Activated CD4-positive, alpha-beta T cell treated with anti-CD3 and anti-CD28 coated beads, Interleukin-2, amount 10 ng/mL, durations not matched to agents 24 days and 14 days (primary cell): ENCODE measurements at regions of chr1 and their contacts with region 1.

Region 1: GRCh38 chr1:215526553-215527151 is 40.5 kb upstream of the KCTD3 start:
- DNase-seq: no peak
- H3K4me3 Mint-ChIP-seq: no peak overlapping the region
- H3K27ac Mint-ChIP-seq: no peak overlapping the region
- H3K4me1 Mint-ChIP-seq: peaks cover 2% of the 10 kb centered on the region
- H3K27me3 Mint-ChIP-seq: no peaks in the 10 kb centered on the region

Region 2: DNA sequence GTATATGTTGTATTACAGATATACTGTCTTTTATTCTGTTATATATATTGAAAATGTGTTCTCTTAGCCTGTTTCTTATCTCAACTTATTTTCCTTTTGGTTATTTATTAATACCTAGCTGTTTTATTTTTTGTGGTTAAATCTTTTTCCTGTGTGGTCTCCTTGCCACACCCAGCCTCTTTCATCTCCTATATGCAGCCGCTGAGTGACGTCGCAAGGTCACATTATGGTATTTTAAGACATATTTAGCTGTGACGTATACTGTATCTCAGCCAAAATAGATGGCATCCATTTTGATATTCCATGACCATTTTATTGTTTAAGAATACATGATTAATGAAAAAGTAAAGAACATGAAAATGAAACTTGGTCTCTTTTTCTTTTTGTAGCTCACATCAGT is 894.6 kb before region 1 on chr1:
- intact Hi-C with region 1: loop called (anchors 1 kb)
- DNase-seq: peak; percentile 76
- H3K4me3 Mint-ChIP-seq: peak overlapping the region; percentile 22
- H3K27ac Mint-ChIP-seq: no peak overlapping the region
- H3K4me1 Mint-ChIP-seq: peaks cover 33% of the 10 kb centered on the region
- H3K27me3 Mint-ChIP-seq: no peaks in the 10 kb centered on the region

Region 3: DNA sequence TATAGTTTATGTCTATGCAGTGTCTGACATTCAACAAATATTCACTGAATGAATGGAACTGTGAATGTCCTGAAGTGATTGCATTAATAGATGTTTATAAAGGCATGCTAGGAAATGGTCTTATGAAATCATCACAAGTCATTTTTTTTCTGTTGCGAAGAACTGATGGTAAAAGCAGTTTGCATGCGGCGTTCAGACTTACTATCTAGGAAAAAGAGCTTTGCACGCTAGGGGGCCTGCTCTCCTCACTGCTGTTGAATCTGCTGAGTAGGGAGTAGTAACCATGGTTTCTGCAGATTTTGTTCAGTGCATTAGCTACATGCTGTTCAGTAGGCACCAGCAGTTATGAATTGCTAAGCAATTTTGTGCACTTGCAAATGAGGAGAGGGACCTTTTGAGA is 865.8 kb before region 1 on chr1:
- intact Hi-C with region 1: loop called (anchors 10 kb)
- DNase-seq: peak; percentile 62
- H3K4me3 Mint-ChIP-seq: no peak overlapping the region
- H3K27ac Mint-ChIP-seq: no peak overlapping the region
- H3K4me1 Mint-ChIP-seq: peaks cover 5% of the 10 kb centered on the region
- H3K27me3 Mint-ChIP-seq: no peaks in the 10 kb centered on the region

Region 4: GRCh38 chr1:215166886-215167285 is 359.8 kb before region 1 on chr1:
- intact Hi-C with region 1: no loop called
- DNase-seq: no peak
- H3K4me3 Mint-ChIP-seq: no peak overlapping the region
- H3K27ac Mint-ChIP-seq: no peak overlapping the region
- H3K4me1 Mint-ChIP-seq: no peaks in the 10 kb centered on the region
- H3K27me3 Mint-ChIP-seq: no peaks in the 10 kb centered on the region